HepG2 (cell line): ENCODE measurements at regions of chr17 and their contacts with region 1.

Region 1: GRCh38 chr17:49180303-49180702 is 30.1 kb downstream of the GNGT2 start:
- DNase-seq: peak; percentile 65
- ATAC-seq: peak; percentile 70
- H3K4me3 ChIP-seq: no peak overlapping the region
- H3K27ac ChIP-seq: no peak overlapping the region
- H3K4me1 ChIP-seq: no peaks in the 10 kb centered on the region
- H3K27me3 ChIP-seq: no peaks in the 10 kb centered on the region
- CTCF ChIP-seq: peak; percentile 74
- EP300 ChIP-seq: no peak
- POLR2A ChIP-seq: no peak
- RAD21 ChIP-seq: peak; percentile 56; the same call in 1 of the 2 replicates

Region 2: GRCh38 chr17:49227436-49228261 is 47.3 kb after region 1 on chr17:
- CTCF ChIA-PET with region 1: interaction called, 21 read pairs
- POLR2A ChIA-PET with region 1: no interaction called
- in situ Hi-C with region 1: loop called (anchors 5 kb)
- intact Hi-C with region 1: loop called (anchors 2 kb)
- DNase-seq: peak; percentile 69
- ATAC-seq: peak; percentile 64
- H3K4me3 ChIP-seq: no peak overlapping the region
- H3K27ac ChIP-seq: no peak overlapping the region
- H3K4me1 ChIP-seq: peaks cover 45% of the 10 kb centered on the region
- H3K27me3 ChIP-seq: peaks cover 13 to 77% of the 10 kb centered on the region in 2 experiments; a peak in 4 of 5 replicates
- CTCF ChIP-seq: peak; percentile 90
- EP300 ChIP-seq: no peak
- POLR2A ChIP-seq: no peak
- RAD21 ChIP-seq: peak; percentile 59; the same call in 1 of the 2 replicates

Region 3: GRCh38 chr17:49290690-49291359 is 110.5 kb after region 1 on chr17:
- CTCF ChIA-PET with region 1: no interaction called
- POLR2A ChIA-PET with region 1: no interaction called
- in situ Hi-C with region 1: no loop called
- intact Hi-C with region 1: loop called (anchors 1 kb)
- DNase-seq: peak; percentile 28
- ATAC-seq: peak; percentile 70
- H3K4me3 ChIP-seq: no peak overlapping the region
- H3K27ac ChIP-seq: no peak overlapping the region
- H3K4me1 ChIP-seq: peaks cover 8% of the 10 kb centered on the region; the same call in 1 of the 2 replicates
- H3K27me3 ChIP-seq: no peaks in the 10 kb centered on the region
- CTCF ChIP-seq: peak; percentile 54
- EP300 ChIP-seq: no peak
- POLR2A ChIP-seq: no peak
- RAD21 ChIP-seq: no peak